Gastrocnemius medialis (tissue), 4 donors: ENCODE measurements at regions of chr3 and their contacts with region 1.

Region 1: GRCh38 chr3:71955240-71956068 is 170.5 kb upstream of the PROK2 start:
- DNase-seq: peak; percentile 43 to 54
- ATAC-seq: peak; percentile 62 to 65
- H3K4me3 ChIP-seq: no peak overlapping the region
- H3K27ac ChIP-seq: no peak overlapping the region
- H3K4me1 ChIP-seq: peaks cover 0 to 6% of the 10 kb centered on the region in 2 donors
- H3K27me3 ChIP-seq: no peaks in the 10 kb centered on the region
- CTCF ChIP-seq: peak; percentile 59 to 79 (median 67)
- POLR2A ChIP-seq: no peak

Region 2: DNA sequence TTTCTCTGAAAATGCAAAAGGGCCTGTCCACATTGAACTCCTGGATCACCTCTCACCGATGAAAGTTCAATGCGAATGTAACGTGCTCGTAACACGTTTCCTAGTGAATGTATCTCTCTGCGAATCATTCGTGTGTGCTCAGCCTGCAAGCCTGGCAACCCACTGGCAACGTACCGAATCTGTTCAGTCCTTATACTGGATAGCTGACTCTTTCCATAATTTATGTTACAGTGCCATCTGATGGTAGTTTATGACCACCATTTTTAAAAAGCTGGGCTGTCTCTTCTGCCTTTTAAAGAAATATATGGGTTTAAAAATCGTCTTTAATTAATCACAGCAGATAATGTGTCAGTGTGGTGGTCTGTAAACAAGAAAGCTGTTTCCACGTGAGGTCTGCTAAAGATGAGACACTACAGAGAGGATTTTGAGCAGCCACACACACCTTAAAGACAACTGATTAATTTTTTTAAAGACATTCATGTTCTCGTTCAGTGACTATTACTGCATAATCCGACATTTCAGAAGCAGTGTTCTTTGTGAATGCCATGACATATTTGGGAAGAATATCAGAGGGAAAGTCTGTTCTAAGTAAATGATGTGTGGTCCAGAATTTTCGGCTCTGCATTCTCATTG is 302.6 kb before region 1 on chr3:
- in situ Hi-C with region 1: no loop called
- intact Hi-C with region 1: no loop called
- DNase-seq: peak; percentile 6 to 19
- ATAC-seq: peak in 1 of 2 donors; percentile 51
- H3K4me3 ChIP-seq: no peak overlapping the region
- H3K27ac ChIP-seq: no peak overlapping the region
- H3K4me1 ChIP-seq: peaks cover 5 to 6% of the 10 kb centered on the region in 2 donors
- H3K27me3 ChIP-seq: no peaks in the 10 kb centered on the region
- CTCF ChIP-seq: peak; percentile 8 to 50 (median 32)
- POLR2A ChIP-seq: no peak

Region 3: GRCh38 chr3:72270072-72270681 is 314.7 kb after region 1 on chr3:
- in situ Hi-C with region 1: no loop called
- intact Hi-C with region 1: loop called (anchors 10 kb)
- DNase-seq: peak; percentile 83 to 89
- ATAC-seq: peak; percentile 95 to 97
- H3K4me3 ChIP-seq: no peak overlapping the region
- H3K27ac ChIP-seq: peak overlapping the region; percentile 27 to 59 (median 54)
- H3K4me1 ChIP-seq: peaks cover 24 to 35% of the 10 kb centered on the region in 2 donors
- H3K27me3 ChIP-seq: no peaks in the 10 kb centered on the region
- CTCF ChIP-seq: no peak
- POLR2A ChIP-seq: no peak